OCI-LY7 (cell line): ENCODE measurements at regions of chr21 and their contacts with region 1.

Region 1: DNA sequence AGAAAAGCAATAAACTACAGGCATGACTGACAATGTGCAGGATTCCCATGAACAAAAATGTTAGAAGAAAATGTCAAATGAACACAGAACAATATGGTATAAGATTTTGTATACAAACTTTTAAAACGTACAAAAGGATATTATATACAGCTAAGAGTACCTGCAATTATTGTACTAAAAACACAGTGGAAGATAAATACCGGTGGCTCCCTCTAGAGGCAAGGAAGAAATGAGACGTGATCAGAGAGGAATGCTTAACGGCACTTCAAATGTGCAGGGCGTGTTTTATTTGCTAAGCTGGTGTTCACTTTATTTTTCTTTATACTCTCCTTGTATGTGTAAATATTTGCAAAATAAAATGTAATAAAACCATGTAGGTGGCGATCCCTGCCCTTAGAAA is 191.8 kb upstream of the SAMSN1 start:
- DNase-seq: peak; percentile 78
- H3K4me3 ChIP-seq: no peak overlapping the region
- H3K27ac ChIP-seq: no peak overlapping the region
- H3K4me1 ChIP-seq: peaks cover 2% of the 10 kb centered on the region
- CTCF ChIP-seq: peak; percentile 97

Region 2: GRCh38 chr21:14403681-14404318 is 334.1 kb before region 1 on chr21:
- CTCF ChIA-PET with region 1: no interaction called
- POLR2A ChIA-PET with region 1: interaction called, 4 read pairs
- intact Hi-C with region 1: loop called (anchors 1 kb)
- DNase-seq: peak; percentile 45
- H3K4me3 ChIP-seq: no peak overlapping the region
- H3K27ac ChIP-seq: no peak overlapping the region
- H3K4me1 ChIP-seq: no peaks in the 10 kb centered on the region
- CTCF ChIP-seq: peak; percentile 87

Region 3: GRCh38 chr21:14523234-14523633 is 214.7 kb before region 1 on chr21:
- CTCF ChIA-PET with region 1: no interaction called
- POLR2A ChIA-PET with region 1: no interaction called
- intact Hi-C with region 1: loop called (anchors 5 kb)
- DNase-seq: no peak
- H3K4me3 ChIP-seq: no peak overlapping the region
- H3K27ac ChIP-seq: no peak overlapping the region
- H3K4me1 ChIP-seq: no peaks in the 10 kb centered on the region
- CTCF ChIP-seq: no peak

Region 4: DNA sequence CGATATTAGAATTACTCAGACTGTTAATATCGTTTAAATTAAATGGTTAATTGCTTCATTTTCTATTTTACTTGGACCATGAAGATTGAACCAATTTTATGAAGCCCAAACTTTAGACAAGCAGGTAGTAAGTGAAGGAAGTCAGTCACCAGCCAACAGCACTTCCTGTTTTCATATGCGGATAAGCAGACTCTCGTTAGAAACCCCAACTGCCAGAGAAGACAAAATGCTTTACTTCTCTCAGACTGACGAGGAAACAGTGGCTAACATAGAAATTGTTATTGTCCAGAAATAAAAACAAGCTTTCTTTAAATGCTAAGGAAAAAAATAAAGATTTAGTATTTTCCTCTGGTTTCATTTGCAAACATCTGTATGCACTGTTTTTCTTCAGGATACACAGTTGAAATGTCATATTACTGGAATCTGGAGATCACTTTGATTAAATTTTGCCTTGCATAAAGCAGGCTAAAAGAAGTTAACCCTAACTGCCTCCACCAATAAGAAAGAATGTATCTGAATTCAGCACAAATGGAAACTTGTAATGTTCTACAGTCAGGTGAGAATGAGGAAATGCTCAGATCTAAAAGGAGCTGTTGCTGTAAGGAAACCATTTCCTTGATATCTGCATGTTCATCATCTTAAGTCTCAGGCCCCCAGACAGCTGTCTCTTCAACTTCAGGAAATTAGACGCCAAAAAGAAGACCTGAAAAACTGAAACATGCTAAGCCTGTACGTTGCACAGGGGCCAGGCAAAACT is 62.0 kb before region 1 on chr21:
- CTCF ChIA-PET with region 1: no interaction called
- POLR2A ChIA-PET with region 1: interaction called, 11 read pairs
- intact Hi-C with region 1: no loop called
- DNase-seq: peak; percentile 90
- H3K4me3 ChIP-seq: peak overlapping the region; percentile 60
- H3K27ac ChIP-seq: peak overlapping the region; percentile 99
- H3K4me1 ChIP-seq: peaks cover 62% of the 10 kb centered on the region
- CTCF ChIP-seq: no peak

Region 5: GRCh38 chr21:14762734-14763694 is 25.1 kb after region 1 on chr21:
- CTCF ChIA-PET with region 1: interaction called, 3 read pairs
- POLR2A ChIA-PET with region 1: interaction called, 4 read pairs
- intact Hi-C with region 1: loop called (anchors 2 kb)
- DNase-seq: peak; percentile 88
- H3K4me3 ChIP-seq: peak overlapping the region; percentile 52
- H3K27ac ChIP-seq: peak overlapping the region; percentile 74
- H3K4me1 ChIP-seq: peaks cover 29% of the 10 kb centered on the region
- CTCF ChIP-seq: no peak